ENCODE measurements at regions of chr10 and their contacts with region 1.

Region 1: GRCh38 chr10:21166557-21167287 is 269.6 kb upstream of the NEBL start:
- DNase-seq: peak in 2 of 4 experiments; percentile 33 to 70
- ATAC-seq: peak; percentile 81
- H3K4me3 ChIP-seq: no peak overlapping the region
- H3K27ac ChIP-seq: peak overlapping the region; percentile 54
- H3K4me1 ChIP-seq: peaks cover 0 to 12% of the 10 kb centered on the region in 2 experiments; a peak in 2 of 5 replicates
- H3K27me3 ChIP-seq: no peaks in the 10 kb centered on the region
- CTCF ChIP-seq: no peak
- EP300 ChIP-seq: peak; percentile 36; the same call in 1 of the 2 replicates
- POLR2A ChIP-seq: no peak
- RAD21 ChIP-seq: no peak

Region 2: GRCh38 chr10:20760460-20760859 is 406.3 kb before region 1 on chr10:
- CTCF ChIA-PET with region 1: no interaction called
- POLR2A ChIA-PET with region 1: no interaction called
- in situ Hi-C with region 1: no loop called
- intact Hi-C with region 1: no loop called
- DNase-seq: no peak
- ATAC-seq: no peak
- H3K4me3 ChIP-seq: no peak overlapping the region
- H3K27ac ChIP-seq: no peak overlapping the region
- H3K4me1 ChIP-seq: no peaks in the 10 kb centered on the region
- H3K27me3 ChIP-seq: no peaks in the 10 kb centered on the region
- CTCF ChIP-seq: no peak
- EP300 ChIP-seq: no peak
- POLR2A ChIP-seq: no peak
- RAD21 ChIP-seq: no peak

Region 3: DNA sequence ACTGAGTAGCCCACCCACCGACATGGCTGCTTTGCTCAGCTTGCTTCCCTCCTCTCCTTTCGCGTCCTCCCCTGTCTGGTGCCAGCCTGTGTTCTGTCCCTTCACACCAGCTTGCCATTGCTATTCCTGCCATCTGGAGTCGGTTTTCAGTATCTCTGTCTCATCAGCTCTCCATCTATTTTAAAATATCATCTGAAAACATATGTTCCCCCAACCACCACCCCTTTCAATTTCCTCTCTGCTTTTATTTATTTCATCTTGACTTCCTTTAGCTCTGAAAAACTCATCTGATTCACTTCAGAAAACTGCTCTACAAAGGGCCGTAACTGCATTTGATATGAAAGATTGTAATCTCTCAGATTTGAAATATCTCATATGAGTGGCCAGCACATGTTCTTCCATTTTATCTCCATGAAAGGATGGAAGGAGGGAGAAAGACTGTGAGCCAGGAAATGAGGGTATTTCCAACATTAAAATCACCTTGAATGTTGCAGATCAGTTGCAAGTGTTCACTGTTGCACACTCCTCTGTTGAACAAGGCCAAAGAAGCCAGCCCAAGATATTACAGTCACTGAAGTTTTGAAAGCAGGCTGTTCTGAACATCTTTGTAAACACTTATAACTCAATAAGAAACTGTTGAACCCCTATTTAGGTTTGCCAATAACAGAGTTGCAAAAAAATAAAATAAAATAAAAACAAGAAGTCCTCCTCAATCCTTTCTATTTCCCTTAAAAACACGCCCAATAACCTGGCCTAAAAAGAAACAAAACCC is 67.2 kb before region 1 on chr10:
- CTCF ChIA-PET with region 1: no interaction called
- POLR2A ChIA-PET with region 1: interaction called, 3 read pairs
- in situ Hi-C with region 1: no loop called
- intact Hi-C with region 1: loop called (anchors 5 kb)
- DNase-seq: no peak
- ATAC-seq: no peak
- H3K4me3 ChIP-seq: no peak overlapping the region
- H3K27ac ChIP-seq: no peak overlapping the region
- H3K4me1 ChIP-seq: peaks cover 0 to 32% of the 10 kb centered on the region in 2 experiments; a peak in 3 of 5 replicates
- H3K27me3 ChIP-seq: no peaks in the 10 kb centered on the region
- CTCF ChIP-seq: no peak
- EP300 ChIP-seq: no peak
- POLR2A ChIP-seq: no peak
- RAD21 ChIP-seq: no peak